PC-9 (cell line): ENCODE measurements at regions of chr17 and their contacts with region 1.

Region 1: GRCh38 chr17:43467981-43468581 is 15.7 kb upstream of the DHX8 start:
- DNase-seq: no peak
- H3K4me3 ChIP-seq: no peak overlapping the region
- H3K27ac ChIP-seq: peak overlapping the region; percentile 81
- H3K4me1 ChIP-seq: peaks cover 29% of the 10 kb centered on the region
- H3K27me3 ChIP-seq: no peaks in the 10 kb centered on the region
- CTCF ChIP-seq: no peak

Region 2: GRCh38 chr17:43431714-43432523 is 36.2 kb before region 1 on chr17:
- CTCF ChIA-PET with region 1: no interaction called
- POLR2A ChIA-PET with region 1: interaction called, 6 read pairs
- intact Hi-C with region 1: loop called (anchors 5 kb)
- DNase-seq: no peak
- H3K4me3 ChIP-seq: no peak overlapping the region
- H3K27ac ChIP-seq: no peak overlapping the region
- H3K4me1 ChIP-seq: peaks cover 19% of the 10 kb centered on the region
- H3K27me3 ChIP-seq: no peaks in the 10 kb centered on the region
- CTCF ChIP-seq: no peak

Region 3: GRCh38 chr17:43444223-43445008 is 23.7 kb before region 1 on chr17:
- CTCF ChIA-PET with region 1: no interaction called
- POLR2A ChIA-PET with region 1: no interaction called
- intact Hi-C with region 1: no loop called
- DNase-seq: no peak
- H3K4me3 ChIP-seq: no peak overlapping the region
- H3K27ac ChIP-seq: no peak overlapping the region
- H3K4me1 ChIP-seq: no peaks in the 10 kb centered on the region
- H3K27me3 ChIP-seq: no peaks in the 10 kb centered on the region
- CTCF ChIP-seq: no peak